WTC11 (cell line): ENCODE measurements at regions of chr11 and their contacts with region 1.

Region 1: GRCh38 chr11:118791111-118791965 is at the start of gene DDX6:
- DNase-seq: peak; percentile 91
- ATAC-seq: peak; percentile 41
- H3K4me3 Mint-ChIP-seq: peak within 1 kb of the TSS; percentile 98
- H3K27ac Mint-ChIP-seq: peak within 1 kb of the TSS; percentile 98
- H3K4me1 Mint-ChIP-seq: peaks cover 24% of the 10 kb centered on the region
- H3K27me3 Mint-ChIP-seq: no peaks in the 10 kb centered on the region
- CTCF ChIP-seq: no peak
- total RNA-seq, gene DDX6: 151 to 167 TPM (median 166 TPM) in 3 replicates

Region 2: GRCh38 chr11:118763041-118763440 is 28.3 kb before region 1 on chr11:
- CTCF ChIA-PET with region 1: no interaction called
- POLR2A ChIA-PET with region 1: no interaction called
- DNase-seq: no peak
- ATAC-seq: no peak
- H3K4me3 Mint-ChIP-seq: no peak overlapping the region
- H3K27ac Mint-ChIP-seq: no peak overlapping the region
- H3K4me1 Mint-ChIP-seq: no peaks in the 10 kb centered on the region
- H3K27me3 Mint-ChIP-seq: no peaks in the 10 kb centered on the region
- CTCF ChIP-seq: no peak

Region 3: DNA sequence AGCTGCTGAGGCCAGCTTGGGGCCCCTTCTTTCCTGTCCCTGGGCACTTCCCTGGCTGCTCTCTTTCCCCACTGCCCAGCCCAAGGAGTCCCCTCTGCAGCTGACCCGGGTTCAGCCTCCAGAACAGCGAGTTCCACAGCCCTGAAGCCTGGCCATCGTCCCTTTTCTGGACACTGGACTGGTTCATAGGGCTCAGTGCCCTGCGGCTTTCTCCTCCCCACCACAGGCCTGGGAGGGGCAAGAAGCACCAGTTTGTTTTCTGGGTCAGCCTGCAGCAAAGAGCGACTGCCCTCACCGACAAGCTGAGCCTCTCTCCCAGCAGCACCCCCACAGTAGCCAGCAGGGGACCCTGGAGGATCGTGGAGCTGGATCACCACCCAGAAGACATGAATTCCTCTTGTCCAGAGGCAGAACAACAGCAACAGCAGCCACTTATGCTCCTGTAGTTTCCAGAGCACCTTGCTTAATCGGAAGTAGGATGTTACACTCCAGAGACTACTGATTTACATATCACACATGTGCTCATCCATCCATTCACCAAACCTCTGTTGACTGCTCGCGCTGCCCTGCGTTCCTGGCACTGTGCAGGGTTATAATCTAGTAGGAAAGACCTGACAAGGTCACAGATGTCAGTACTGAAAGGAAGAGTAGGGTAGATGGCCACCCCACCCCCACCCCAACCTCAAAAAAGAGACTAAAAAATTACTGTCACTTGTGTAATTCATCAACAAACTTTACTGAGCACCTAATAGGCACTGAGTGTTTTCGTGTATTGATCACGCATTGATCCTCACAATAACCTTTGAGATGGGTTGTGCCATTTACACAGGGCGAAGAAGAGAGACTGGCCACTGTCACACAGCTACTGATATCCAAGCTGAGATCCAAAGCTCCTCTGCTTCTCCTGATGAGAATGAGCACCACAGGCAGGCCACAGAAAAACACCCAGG is 79.3 kb after region 1 on chr11:
- CTCF ChIA-PET with region 1: interaction called, 12 read pairs
- POLR2A ChIA-PET with region 1: interaction called, 8 read pairs
- DNase-seq: peak; percentile 25
- ATAC-seq: peak; percentile 63
- H3K4me3 Mint-ChIP-seq: peak overlapping the region; percentile 42
- H3K27ac Mint-ChIP-seq: peak overlapping the region; percentile 65; the same call in 1 of the 2 replicates
- H3K4me1 Mint-ChIP-seq: peaks cover 18% of the 10 kb centered on the region
- H3K27me3 Mint-ChIP-seq: no peaks in the 10 kb centered on the region; the same call in 1 of the 2 replicates
- CTCF ChIP-seq: no peak

Region 4: GRCh38 chr11:118907051-118908042 is 116.0 kb after region 1 on chr11:
- CTCF ChIA-PET with region 1: interaction called, 11 read pairs
- POLR2A ChIA-PET with region 1: interaction called, 46 read pairs
- DNase-seq: peak; percentile 95
- ATAC-seq: peak; percentile 31
- H3K4me3 Mint-ChIP-seq: peak overlapping the region; percentile 72
- H3K27ac Mint-ChIP-seq: peak overlapping the region; percentile 74
- H3K4me1 Mint-ChIP-seq: peaks cover 37% of the 10 kb centered on the region
- H3K27me3 Mint-ChIP-seq: no peaks in the 10 kb centered on the region
- CTCF ChIP-seq: peak; percentile 92

Region 5: GRCh38 chr11:119011483-119012053 is 220.2 kb after region 1 on chr11:
- CTCF ChIA-PET with region 1: no interaction called
- POLR2A ChIA-PET with region 1: no interaction called
- DNase-seq: no peak
- ATAC-seq: peak; percentile 41
- H3K4me3 Mint-ChIP-seq: no peak overlapping the region
- H3K27ac Mint-ChIP-seq: 0 out of 2 replicates have a peak overlapping the region, but pooled peaks have one; percentile 68
- H3K4me1 Mint-ChIP-seq: peaks cover 1% of the 10 kb centered on the region; the same call in 1 of the 2 replicates
- H3K27me3 Mint-ChIP-seq: no peaks in the 10 kb centered on the region
- CTCF ChIP-seq: no peak